RWPE1 (cell line): ENCODE measurements at regions of chr1 and their contacts with region 1.

Region 1: DNA sequence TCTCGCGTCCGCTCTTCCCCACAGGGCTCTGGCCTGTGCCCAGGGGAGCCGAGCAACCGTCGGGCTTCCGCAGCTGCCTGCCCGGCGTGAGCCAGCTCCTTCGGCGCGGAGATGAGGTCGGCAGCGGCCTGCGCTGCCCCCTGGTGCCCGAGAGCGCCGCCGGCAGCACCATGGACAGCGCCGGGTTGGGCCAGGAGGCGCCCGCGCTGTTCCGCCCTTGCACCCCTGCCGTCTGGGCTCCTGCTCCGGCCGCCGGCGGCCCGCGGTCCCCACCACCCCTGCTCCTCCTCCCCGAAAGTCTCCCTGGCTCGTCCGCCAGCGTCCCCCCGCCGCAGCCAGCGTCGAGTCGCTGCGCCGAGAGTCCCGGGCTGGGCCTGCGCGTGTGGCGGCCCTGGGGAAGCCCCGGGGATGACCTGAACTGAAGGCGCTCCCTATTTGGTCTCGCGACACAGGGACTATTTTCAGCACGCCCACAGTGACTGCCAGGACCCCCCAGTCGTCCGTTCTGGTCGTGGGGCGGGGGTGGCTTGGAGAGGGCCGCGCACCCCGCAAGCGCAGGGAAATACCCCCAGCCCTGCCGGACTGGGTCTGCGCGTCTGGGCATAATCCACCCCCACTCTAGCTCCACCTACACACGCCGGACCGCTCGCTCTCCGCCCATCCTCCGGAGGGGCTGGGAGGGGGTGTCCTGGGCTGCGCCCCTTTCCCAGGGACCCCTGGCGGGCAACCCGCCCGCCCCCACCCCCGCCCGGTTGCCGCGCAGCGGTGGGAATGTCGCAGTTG is 1.3 kb downstream of the HES3 start:
- DNase-seq: peak; percentile 72
- H3K27ac ChIP-seq: no peak overlapping the region
- CTCF ChIP-seq: peak; percentile 80

Region 2: DNA sequence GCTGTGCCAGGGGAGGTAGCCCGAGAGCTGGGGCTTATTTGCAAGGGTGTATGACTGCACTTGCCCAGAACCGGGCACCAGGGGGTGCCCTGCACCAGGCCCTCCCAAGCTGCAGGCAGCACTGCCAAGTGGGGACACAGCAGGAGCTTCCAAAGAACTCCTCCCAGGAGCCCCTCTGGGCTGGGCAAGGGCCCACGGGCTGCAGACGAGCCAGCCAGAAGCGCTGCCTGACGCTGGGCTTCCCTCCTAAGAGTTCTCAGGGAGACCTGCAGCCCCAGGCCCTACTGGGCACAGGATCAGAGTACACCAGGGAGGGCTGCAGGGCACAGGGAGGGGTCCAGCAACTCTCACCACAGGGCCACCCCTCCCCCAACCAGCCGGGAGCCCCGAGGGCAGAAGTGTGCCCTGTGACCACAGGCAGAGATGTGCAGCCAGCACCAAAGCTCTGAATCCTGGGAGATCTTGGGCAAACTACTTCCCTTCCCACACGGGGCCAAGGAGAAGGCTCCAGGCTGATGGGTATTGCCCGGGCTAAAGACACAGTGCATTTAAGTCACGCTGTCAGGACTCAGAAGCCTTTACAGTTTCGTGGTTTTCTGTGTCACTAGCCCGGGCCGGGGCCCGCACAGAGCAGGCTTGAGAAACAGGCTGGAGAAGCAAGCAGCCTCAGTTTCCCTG is 136.2 kb before region 1 on chr1:
- CTCF ChIA-PET with region 1: interaction called, 13 read pairs
- POLR2A ChIA-PET with region 1: no interaction called
- DNase-seq: peak; percentile 75
- H3K27ac ChIP-seq: no peak overlapping the region
- CTCF ChIP-seq: peak; percentile 19; the same call in 1 of the 2 replicates

Region 3: DNA sequence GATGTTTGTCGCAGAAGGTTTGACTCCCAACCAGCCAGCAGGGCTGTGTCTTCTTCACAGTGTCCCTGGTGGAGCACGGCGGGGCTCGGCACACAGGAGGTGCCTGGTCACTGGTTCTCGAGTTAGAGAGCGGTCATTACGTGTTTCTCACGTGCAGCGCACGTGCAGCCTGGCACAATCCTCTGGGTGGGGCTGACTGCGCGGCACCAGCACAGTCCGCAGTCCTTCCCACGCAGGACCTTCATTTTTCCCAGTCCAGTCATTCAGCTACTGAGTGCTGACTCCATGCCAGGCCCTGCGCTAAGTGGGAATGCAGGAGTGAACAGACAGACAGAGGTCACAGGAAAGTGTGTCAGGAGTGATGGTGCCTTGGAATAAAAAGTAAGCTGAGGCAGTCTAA is 61.8 kb after region 1 on chr1:
- CTCF ChIA-PET with region 1: no interaction called
- POLR2A ChIA-PET with region 1: no interaction called
- DNase-seq: no peak
- H3K27ac ChIP-seq: peak overlapping the region; percentile 35
- CTCF ChIP-seq: no peak

Region 4: GRCh38 chr1:6338695-6339094 is 93.4 kb after region 1 on chr1:
- CTCF ChIA-PET with region 1: interaction called, 45 read pairs
- POLR2A ChIA-PET with region 1: no interaction called
- DNase-seq: no peak
- H3K27ac ChIP-seq: no peak overlapping the region; the same call in 1 of the 2 replicates
- CTCF ChIP-seq: no peak

Region 5: GRCh38 chr1:6343506-6344405 is 98.5 kb after region 1 on chr1:
- CTCF ChIA-PET with region 1: interaction called, 45 read pairs
- POLR2A ChIA-PET with region 1: no interaction called
- DNase-seq: peak; percentile 91
- H3K27ac ChIP-seq: peak overlapping the region; percentile 87
- CTCF ChIP-seq: peak; percentile 97